ENCODE measurements at regions of chr19 and their contacts with region 1.

Region 1: DNA sequence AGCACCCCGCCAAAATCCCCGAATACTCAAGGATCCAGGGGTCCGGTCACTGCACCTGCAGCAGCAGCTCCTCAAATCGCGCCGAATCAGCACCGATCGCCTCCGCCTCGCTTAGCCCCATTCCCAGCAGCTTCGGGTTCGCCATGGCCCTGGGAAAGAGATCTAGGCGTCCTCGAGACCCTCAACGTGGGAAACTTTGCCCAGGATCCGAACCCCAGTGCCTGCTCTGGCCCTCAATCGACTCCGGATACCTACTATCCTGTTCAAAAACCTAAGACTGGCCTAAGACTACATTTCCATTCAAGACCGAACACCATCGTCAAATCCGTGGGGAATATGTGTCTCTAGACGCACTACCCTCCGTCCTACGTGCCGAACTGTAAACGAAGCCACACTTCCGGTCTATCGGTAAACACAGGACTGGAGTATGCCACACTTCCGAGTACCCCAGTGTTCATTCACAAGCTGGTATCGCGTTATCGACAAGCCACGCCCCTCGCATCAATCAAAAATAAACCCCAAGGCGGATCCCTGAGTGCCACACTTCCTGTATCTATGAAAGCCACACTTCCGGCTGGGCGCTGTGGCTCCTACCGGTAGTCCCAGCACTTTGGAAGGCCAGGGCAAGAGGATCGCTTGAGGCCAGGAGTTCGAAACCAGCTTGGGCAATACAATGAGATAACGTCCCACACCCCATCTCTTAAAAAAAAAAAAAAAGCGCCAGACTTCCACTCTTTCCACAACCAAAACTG is at the start of gene PIH1D1:
- DNase-seq: peak; percentile 99
- H3K4me3 Mint-ChIP-seq: peak within 1 kb of the TSS; percentile 100
- H3K27ac Mint-ChIP-seq: peak within 1 kb of the TSS; percentile 100
- H3K4me1 Mint-ChIP-seq: peaks cover 40% of the 10 kb centered on the region
- H3K27me3 Mint-ChIP-seq: no peaks in the 10 kb centered on the region
- total RNA-seq, gene PIH1D1: 80.7 to 84.4 TPM

Region 2: DNA sequence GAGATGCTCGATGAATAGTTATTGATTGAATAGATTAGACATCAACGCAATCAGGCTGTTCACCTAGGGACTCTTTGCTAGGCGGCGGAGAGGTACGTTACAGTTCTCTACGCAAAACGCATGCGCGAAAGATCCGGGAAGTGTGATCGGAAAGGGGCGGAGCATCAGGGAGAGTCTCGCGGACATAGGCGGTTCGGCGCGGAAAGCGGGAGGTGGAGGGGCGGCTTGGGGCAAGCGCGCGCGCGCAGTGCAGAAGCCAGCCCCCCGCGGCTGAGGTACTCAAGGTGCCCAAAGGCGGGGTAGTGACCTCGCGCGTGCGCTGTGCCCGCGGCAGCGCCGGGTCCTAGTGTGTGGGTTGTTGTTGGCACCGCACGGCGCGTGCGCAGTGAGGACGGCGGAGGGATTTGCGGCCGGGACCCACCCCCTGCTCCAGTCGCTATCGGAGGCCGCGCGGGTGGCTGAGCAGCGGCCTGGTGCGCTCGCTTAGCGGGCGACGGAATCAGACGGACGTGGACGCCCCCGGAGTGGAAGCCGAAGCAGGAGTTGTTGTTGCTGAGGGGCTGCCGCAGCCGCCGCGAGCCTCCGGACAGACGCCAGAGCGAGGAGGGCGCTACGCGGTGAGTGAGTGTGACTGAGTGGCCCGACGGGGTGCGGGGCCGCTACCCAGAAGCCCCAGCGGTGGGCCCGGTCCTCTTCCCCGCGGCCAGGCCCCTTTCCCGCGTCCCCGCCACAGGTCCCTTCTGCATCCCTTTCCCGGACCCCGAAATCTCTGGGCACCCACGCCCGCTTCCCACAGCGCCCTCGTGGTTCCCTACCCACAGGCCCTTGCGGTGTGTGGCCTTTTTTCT is 366.4 kb before region 1 on chr19 and contains the start of gene SNRNP70:
- CTCF ChIA-PET with region 1: no interaction called
- intact Hi-C with region 1: loop called (anchors 1 kb)
- DNase-seq: peak; percentile 99
- H3K4me3 Mint-ChIP-seq: peak within 1 kb of the TSS; percentile 96
- H3K27ac Mint-ChIP-seq: peak within 1 kb of the TSS; percentile 93
- H3K4me1 Mint-ChIP-seq: peaks cover 31% of the 10 kb centered on the region
- H3K27me3 Mint-ChIP-seq: no peaks in the 10 kb centered on the region
- total RNA-seq, gene SNRNP70: 163 to 166 TPM

Region 3: DNA sequence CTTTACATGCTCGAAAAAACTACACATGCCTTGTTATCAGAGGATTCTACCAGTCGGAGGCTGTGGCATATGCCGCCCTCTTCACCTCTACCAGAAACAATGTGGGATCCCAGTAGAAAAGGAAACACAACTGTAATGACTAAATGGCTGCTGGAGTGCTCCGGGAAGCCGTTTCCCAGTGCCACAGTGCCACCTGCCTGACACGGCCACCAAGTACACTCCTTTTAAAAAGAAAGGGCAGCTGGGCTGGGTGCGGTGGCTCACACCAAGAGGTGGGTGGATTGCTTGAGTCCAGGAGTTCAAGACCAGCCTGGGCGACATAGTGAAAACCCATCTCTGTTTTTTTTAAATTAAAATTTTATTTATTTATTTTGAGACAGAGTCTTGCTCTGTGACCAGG is 226.8 kb before region 1 on chr19:
- CTCF ChIA-PET with region 1: no interaction called
- intact Hi-C with region 1: no loop called
- DNase-seq: peak; percentile 70
- H3K4me3 Mint-ChIP-seq: no peak overlapping the region
- H3K27ac Mint-ChIP-seq: no peak overlapping the region
- H3K4me1 Mint-ChIP-seq: peaks cover 4% of the 10 kb centered on the region
- H3K27me3 Mint-ChIP-seq: peaks cover 4% of the 10 kb centered on the region

Region 4: GRCh38 chr19:49331616-49332055 is 120.0 kb before region 1 on chr19:
- CTCF ChIA-PET with region 1: no interaction called
- intact Hi-C with region 1: loop called (anchors 2 kb)
- DNase-seq: peak; percentile 84
- H3K4me3 Mint-ChIP-seq: peak overlapping the region; percentile 44
- H3K27ac Mint-ChIP-seq: peak overlapping the region; percentile 81
- H3K4me1 Mint-ChIP-seq: peaks cover 74% of the 10 kb centered on the region
- H3K27me3 Mint-ChIP-seq: no peaks in the 10 kb centered on the region

Region 5: GRCh38 chr19:49468746-49469447 is 17.3 kb after region 1 on chr19:
- CTCF ChIA-PET with region 1: interaction called, 10 read pairs
- intact Hi-C with region 1: loop called (anchors 1 kb)
- DNase-seq: peak; percentile 90
- H3K4me3 Mint-ChIP-seq: peak overlapping the region; percentile 43
- H3K27ac Mint-ChIP-seq: peak overlapping the region; percentile 96
- H3K4me1 Mint-ChIP-seq: peaks cover 48% of the 10 kb centered on the region
- H3K27me3 Mint-ChIP-seq: no peaks in the 10 kb centered on the region

Region 6: DNA sequence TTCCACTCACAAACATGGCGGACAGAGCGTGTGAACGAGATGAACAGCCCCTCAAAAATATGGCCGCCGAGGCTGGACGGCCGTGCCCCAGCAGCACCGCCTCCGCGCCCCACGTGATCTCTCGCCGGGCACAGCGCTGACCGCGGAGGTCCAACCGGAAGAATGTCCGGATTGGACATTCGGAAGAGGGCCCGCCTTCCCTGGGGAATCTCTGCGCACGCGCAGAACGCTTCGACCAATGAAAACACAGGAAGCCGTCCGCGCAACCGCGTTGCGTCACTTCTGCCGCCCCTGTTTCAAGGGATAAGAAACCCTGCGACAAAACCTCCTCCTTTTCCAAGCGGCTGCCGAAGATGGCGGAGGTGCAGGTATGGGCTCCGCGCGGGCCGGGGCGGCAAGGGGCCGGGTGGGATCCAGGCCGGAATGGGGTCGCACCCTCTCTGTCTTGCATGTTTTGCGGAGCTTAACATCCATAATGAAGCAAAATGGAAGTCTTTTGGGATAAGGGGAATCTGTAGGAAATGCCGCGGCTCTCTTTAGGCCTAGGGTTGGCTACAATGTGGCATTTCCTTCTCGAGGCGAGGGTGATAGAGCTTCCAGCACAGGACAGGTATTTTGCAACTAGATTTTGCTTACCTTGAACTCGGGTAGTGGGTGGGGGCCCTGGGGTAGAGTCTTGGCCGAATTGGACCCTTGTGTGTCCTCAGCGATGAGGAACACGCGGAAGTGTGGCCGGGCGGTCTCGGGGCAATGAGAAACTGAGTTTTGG is 35.9 kb after region 1 on chr19 and contains the start of gene RPL13A:
- CTCF ChIA-PET with region 1: no interaction called
- intact Hi-C with region 1: loop called (anchors 1 kb)
- DNase-seq: peak; percentile 100
- H3K4me3 Mint-ChIP-seq: peak within 1 kb of the TSS; percentile 99
- H3K27ac Mint-ChIP-seq: peak within 1 kb of the TSS; percentile 95
- H3K4me1 Mint-ChIP-seq: peaks cover 28% of the 10 kb centered on the region
- H3K27me3 Mint-ChIP-seq: no peaks in the 10 kb centered on the region
- total RNA-seq, gene RPL13A: 4,441 to 4,607 TPM

Region 7: GRCh38 chr19:49497047-49497788 is 45.6 kb after region 1 on chr19:
- CTCF ChIA-PET with region 1: no interaction called
- intact Hi-C with region 1: loop called (anchors 1 kb)
- DNase-seq: peak; percentile 79
- H3K4me3 Mint-ChIP-seq: peak overlapping the region; percentile 87
- H3K27ac Mint-ChIP-seq: peak overlapping the region; percentile 96
- H3K4me1 Mint-ChIP-seq: peaks cover 49% of the 10 kb centered on the region
- H3K27me3 Mint-ChIP-seq: no peaks in the 10 kb centered on the region

Region 8: DNA sequence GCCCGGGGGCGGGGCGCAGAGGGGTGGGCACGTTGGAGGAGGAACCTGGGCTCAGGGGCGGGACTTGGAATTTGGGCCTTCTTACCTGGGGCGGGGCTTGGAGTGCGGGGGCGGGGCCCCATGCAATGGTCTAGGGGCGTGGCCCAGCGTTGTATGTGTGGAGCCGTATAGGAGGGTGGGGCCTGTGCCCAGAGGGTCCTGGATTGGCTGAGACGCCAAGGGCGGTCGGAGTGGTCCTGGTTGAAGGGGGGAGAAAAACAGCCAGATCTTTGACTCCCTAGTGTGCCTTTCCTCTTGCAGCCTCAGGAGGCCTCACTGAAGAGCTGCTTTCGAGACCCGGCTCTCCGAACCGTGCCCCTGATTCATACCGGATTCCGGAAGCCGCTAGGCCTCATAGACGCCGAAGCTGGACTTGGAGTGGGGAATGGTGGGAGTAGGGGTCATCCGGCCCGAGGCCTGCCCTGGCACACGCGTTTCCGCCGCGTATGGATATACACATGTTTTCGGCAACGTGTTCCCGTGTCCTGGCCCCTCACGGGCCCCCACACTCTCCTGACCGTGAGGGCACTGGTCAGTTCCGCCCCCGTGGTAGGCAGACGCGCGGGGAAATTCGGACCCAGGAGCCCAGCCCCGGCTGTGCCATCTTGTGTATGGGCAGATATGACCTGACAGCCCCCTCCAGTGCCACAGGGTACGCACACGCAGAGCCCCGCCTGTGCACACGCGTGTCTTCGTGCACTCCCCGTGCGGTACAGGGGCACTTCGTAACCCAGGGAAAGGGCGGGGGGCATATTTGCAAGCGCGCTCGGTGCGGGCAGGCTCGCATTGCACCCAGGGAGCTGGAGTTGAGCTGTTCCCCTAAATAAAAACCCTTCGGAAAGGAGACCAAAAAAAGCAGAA is 138.7 kb after region 1 on chr19:
- CTCF ChIA-PET with region 1: no interaction called
- intact Hi-C with region 1: no loop called
- DNase-seq: peak; percentile 96
- H3K4me3 Mint-ChIP-seq: peak overlapping the region; percentile 77
- H3K27ac Mint-ChIP-seq: peak overlapping the region; percentile 85
- H3K4me1 Mint-ChIP-seq: peaks cover 25% of the 10 kb centered on the region
- H3K27me3 Mint-ChIP-seq: no peaks in the 10 kb centered on the region

Measured in activated naive CD4-positive, alpha-beta T cell treated with anti-CD3 and anti-CD28 coated beads for 36 hours (primary cell).